ENCODE measurements at regions of chr4 and their contacts with region 1.

Region 1: GRCh38 chr4:162557516-162558106 is 393.8 kb upstream of the FSTL5 start:
- DNase-seq: no peak
- H3K4me3 ChIP-seq: no peak overlapping the region
- H3K27ac ChIP-seq: no peak overlapping the region
- H3K4me1 ChIP-seq: no peaks in the 10 kb centered on the region
- H3K27me3 ChIP-seq: no peaks in the 10 kb centered on the region
- CTCF ChIP-seq: no peak

Region 2: GRCh38 chr4:162512716-162513115 is 44.9 kb before region 1 on chr4:
- CTCF ChIA-PET with region 1: no interaction called
- POLR2A ChIA-PET with region 1: interaction called, 27 read pairs
- intact Hi-C with region 1: no loop called
- DNase-seq: no peak
- H3K4me3 ChIP-seq: no peak overlapping the region
- H3K27ac ChIP-seq: no peak overlapping the region
- H3K4me1 ChIP-seq: no peaks in the 10 kb centered on the region
- H3K27me3 ChIP-seq: no peaks in the 10 kb centered on the region
- CTCF ChIP-seq: no peak

Region 3: GRCh38 chr4:162535121-162535520 is 22.5 kb before region 1 on chr4:
- CTCF ChIA-PET with region 1: no interaction called
- POLR2A ChIA-PET with region 1: no interaction called
- intact Hi-C with region 1: no loop called
- DNase-seq: no peak
- H3K4me3 ChIP-seq: no peak overlapping the region
- H3K27ac ChIP-seq: no peak overlapping the region
- H3K4me1 ChIP-seq: no peaks in the 10 kb centered on the region
- H3K27me3 ChIP-seq: no peaks in the 10 kb centered on the region
- CTCF ChIP-seq: peak; percentile 27; the same call in 1 of the 2 replicates

Measured in PC-9 (cell line).